H1 (cell line): ENCODE measurements at regions of chr9 and their contacts with region 1.

Region 1: DNA sequence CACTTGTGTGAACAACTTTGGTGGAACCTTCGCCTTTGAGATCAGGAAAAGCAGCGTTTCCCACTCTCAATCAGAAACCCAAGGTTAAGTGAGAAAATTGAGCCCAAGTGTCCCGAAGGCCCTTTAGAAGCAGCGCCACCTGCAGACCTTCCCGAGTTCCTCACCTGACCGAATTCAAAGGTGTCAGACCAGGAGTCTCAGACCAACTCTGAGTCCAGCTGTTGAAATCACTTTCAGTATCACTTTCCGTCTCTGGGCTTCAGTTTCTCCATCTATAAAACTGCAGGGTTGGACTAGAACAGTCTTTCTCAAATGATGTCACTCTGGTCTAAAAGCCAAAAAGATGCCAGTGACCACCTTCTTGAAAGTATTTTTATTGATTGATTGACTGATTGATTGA is 31.7 kb upstream of the GRHPR start:
- DNase-seq: peak; percentile 31 to 70
- H3K4me3 ChIP-seq: no peak overlapping the region
- H3K27ac ChIP-seq: no peak overlapping the region
- H3K4me1 ChIP-seq: no peaks in the 10 kb centered on the region; a peak in 1 of 7 replicates
- H3K27me3 ChIP-seq: no peaks in the 10 kb centered on the region
- CTCF ChIP-seq: peak; percentile 76 to 88 (median 79)
- EP300 ChIP-seq: no peak
- POLR2A ChIP-seq: no peak
- RAD21 ChIP-seq: peak; percentile 66 to 73

Region 2: DNA sequence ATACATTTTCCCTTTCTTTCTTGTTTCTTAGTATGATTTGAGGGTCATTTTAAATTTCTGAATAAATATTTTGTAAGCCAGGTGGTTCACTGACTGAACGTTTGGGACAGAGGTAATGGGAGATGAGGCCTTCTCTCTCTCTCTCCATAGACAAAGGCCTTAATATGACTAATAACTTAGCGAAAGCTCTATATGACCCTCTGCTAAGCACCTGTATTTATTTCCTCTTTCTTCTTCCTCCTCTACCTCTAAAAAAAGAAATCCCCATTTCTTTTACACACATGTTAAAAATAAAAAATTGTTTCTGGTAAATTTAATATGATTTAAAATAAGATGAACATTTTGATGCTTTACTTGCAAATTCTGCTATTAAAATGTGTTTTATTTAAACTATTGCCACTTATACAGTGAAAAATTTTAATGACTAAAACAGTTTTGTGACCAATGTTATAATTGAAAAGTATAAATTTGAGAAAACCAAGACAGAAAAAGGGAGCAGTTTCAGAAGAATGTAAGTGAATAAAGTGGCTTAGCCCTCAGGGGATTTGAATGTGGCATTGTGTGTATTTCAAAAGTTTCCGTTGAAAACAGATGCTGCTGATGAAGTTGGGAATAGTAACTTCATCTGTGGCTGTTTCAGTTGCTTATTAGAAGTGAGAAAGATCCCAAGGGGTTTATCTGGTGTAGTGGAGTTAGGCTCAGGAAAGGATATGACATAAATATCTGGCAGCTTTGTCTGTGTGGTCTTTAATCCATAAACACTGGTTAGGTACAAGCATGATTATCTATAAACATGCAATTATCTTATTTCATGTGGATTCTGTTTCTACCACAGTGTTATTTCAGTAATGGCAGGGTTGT is 96.9 kb before region 1 on chr9:
- CTCF ChIA-PET with region 1: no interaction called
- POLR2A ChIA-PET with region 1: no interaction called
- DNase-seq: no peak
- H3K4me3 ChIP-seq: no peak overlapping the region
- H3K27ac ChIP-seq: no peak overlapping the region
- H3K4me1 ChIP-seq: no peaks in the 10 kb centered on the region; a peak in 2 of 7 replicates
- H3K27me3 ChIP-seq: no peaks in the 10 kb centered on the region; a peak in 1 of 7 replicates
- CTCF ChIP-seq: no peak
- EP300 ChIP-seq: no peak
- POLR2A ChIP-seq: no peak
- RAD21 ChIP-seq: no peak

Region 3: GRCh38 chr9:37408933-37409710 is 18.4 kb after region 1 on chr9:
- CTCF ChIA-PET with region 1: interaction called, 28 read pairs
- POLR2A ChIA-PET with region 1: interaction called, 3 read pairs
- DNase-seq: no peak
- H3K4me3 ChIP-seq: no peak overlapping the region
- H3K27ac ChIP-seq: no peak overlapping the region
- H3K4me1 ChIP-seq: peaks cover 0 to 8% (median 2%) of the 10 kb centered on the region in 4 experiments; a peak in 3 of 7 replicates
- H3K27me3 ChIP-seq: no peaks in the 10 kb centered on the region
- CTCF ChIP-seq: no peak
- EP300 ChIP-seq: no peak
- POLR2A ChIP-seq: no peak
- RAD21 ChIP-seq: no peak

Region 4: DNA sequence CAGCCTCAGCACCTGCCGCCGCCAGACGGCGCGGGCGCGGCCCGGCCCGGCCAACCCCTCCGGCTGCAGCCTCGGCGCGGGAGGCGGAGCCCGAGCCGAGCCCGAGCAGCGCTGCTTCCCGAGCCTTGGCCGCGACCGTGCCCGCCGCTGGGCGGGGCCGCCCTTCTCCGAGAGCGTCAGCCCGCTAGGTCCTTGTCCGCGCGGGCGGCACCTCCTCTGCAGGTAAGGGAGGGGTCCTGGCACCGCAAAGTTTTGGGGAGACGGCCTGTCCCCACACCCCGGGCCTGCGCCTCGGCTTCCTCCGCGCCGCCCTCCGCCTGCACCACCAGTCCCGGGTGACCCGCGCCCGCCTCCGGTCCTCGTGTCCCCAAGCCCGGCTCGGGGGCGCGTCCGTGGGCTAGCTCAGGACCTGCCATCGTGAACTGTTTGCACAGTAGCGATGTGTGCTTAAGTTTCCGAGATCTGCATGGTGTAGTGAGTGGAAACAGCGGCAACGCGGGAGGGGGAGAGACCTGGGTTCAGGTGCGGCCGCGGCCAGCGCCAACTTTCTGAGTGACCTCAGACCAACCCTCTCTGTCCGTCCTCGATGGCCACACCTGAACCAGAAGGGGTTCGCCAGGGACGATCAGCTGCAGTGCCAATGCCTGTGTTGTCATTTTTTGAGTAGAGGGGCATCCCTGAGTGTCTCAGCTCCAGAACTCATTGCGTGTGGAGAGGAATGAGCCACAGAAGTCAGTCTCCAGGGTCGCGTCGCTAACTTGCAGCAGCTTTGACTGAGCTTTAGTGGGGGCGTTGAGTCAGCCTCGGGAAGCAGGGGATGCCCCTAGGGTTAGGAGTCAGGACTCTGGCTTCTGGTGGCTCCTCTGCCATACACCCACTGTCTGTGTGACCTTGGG is 260.4 kb after region 1 on chr9 and contains the start of gene FRMPD1:
- CTCF ChIA-PET with region 1: no interaction called
- POLR2A ChIA-PET with region 1: no interaction called
- DNase-seq: peak; percentile 13 to 82
- H3K4me3 ChIP-seq: peak within 1 kb of the TSS; percentile 58 to 78 (median 70)
- H3K27ac ChIP-seq: no peak within 1 kb of the TSS
- H3K4me1 ChIP-seq: peaks cover 0 to 9% (median 4%) of the 10 kb centered on the region in 4 experiments; a peak in 5 of 7 replicates
- H3K27me3 ChIP-seq: peaks cover 21 to 44% (median 42%) of the 10 kb centered on the region in 4 experiments
- CTCF ChIP-seq: peak in 1 of 3 experiments; percentile 24; a peak in 1 of 4 replicates
- EP300 ChIP-seq: no peak
- POLR2A ChIP-seq: no peak
- RAD21 ChIP-seq: peak in 1 of 2 experiments; percentile 17; a peak in 1 of 4 replicates
- total RNA-seq, gene FRMPD1: 0.32 and 0.52 TPM in 2 replicates